T-cell (primary cell): ENCODE measurements at regions of chr15 and their contacts with region 1.

Region 1: DNA sequence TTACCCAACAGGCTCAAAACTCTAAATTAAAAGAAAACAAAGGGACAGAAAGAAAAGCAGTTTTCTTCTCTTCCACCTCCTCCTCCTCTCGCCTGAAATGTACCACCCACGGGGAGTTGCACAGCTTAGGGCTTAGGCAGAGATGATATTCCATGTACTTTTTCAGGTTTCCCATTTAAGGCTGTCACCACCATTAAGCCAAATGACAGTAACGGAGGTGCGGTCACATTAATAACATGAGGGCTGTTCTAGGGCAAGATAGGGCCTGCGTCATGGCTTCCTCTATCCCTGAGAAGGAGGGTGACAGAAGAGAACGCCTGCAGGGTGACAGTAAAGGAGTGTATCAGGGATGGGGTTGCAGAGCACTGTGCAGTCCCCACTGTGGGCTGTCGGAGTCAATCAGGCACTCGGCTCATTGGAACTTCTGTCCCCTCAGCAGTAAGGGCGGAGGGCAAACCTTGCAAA is 51.7 kb upstream of the TJP1 start:
- DNase-seq: no peak
- ATAC-seq: no peak
- H3K4me3 ChIP-seq: no peak overlapping the region
- H3K4me3 Mint-ChIP-seq: no peak overlapping the region
- H3K27ac ChIP-seq: no peak overlapping the region
- H3K27ac Mint-ChIP-seq: no peak overlapping the region
- H3K4me1 ChIP-seq: no peaks in the 10 kb centered on the region
- H3K4me1 Mint-ChIP-seq: no peaks in the 10 kb centered on the region
- H3K27me3 ChIP-seq: peaks cover 2 to 5% of the 10 kb centered on the region in 2 experiments
- H3K27me3 Mint-ChIP-seq: peaks cover 11 to 24% of the 10 kb centered on the region in 2 donors

Region 2: DNA sequence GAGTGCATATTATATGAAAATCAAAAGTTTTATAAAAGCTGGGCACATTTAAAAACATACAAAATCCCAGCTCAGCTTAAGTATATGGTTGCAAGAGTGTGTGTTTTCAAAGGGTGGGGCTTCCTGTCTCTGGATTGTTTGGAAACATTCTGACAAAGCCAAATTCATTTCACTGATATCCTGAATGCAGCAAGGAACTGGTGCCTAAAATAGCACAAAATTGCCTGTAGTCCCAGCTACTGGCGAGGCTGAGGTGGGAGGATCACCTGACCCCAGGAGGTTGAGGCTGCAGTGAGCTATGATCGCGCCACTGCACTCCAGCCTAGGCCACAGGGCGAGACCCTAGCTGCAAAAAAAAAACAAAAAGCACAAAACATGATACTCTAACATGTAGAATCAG is 38.7 kb before region 1 on chr15:
- CTCF ChIA-PET with region 1: no interaction called
- POLR2A ChIA-PET with region 1: interaction called in 1 of 2 experiments, 17 read pairs
- DNase-seq: no peak
- ATAC-seq: no peak
- H3K4me3 ChIP-seq: no peak overlapping the region
- H3K4me3 Mint-ChIP-seq: no peak overlapping the region
- H3K27ac ChIP-seq: no peak overlapping the region
- H3K27ac Mint-ChIP-seq: no peak overlapping the region
- H3K4me1 ChIP-seq: no peaks in the 10 kb centered on the region
- H3K4me1 Mint-ChIP-seq: no peaks in the 10 kb centered on the region
- H3K27me3 ChIP-seq: peaks cover 15 to 17% of the 10 kb centered on the region in 2 experiments
- H3K27me3 Mint-ChIP-seq: peaks cover 41 to 53% of the 10 kb centered on the region in 2 donors